Right ventricle myocardium inferior (tissue), 1 donor: ENCODE measurements at regions of chr4 and their contacts with region 1.

Region 1: DNA sequence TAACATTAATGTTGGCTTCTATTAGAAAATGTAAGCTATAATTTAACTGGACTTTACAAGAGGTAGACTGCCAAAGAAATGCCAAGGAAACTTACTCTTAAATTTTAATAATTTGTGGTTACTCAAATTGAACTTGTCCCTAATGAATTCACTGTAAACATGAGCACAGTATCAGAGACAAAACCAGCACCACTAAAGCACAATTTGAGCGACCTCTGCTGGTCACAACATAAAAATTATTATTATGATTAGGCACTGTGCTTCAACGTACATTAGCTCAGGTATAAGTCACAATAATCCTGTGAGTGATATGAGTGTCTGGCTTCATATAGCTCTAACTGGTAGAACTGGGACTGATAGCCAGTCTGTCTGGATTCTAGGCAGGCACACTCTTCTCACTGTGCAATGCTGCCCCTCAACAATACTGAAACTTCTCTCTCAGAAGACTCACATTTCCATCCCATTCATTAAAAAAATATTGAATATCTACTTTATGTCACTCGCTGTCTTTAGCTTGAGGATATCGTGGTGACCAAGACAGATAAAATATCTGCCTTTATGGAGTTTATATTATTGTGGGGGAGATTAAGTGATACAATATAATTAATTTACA is 8.0 kb downstream of the NUDT6 start:
- DNase-seq: no peak
- ATAC-seq: peak; percentile 60

Region 2: DNA sequence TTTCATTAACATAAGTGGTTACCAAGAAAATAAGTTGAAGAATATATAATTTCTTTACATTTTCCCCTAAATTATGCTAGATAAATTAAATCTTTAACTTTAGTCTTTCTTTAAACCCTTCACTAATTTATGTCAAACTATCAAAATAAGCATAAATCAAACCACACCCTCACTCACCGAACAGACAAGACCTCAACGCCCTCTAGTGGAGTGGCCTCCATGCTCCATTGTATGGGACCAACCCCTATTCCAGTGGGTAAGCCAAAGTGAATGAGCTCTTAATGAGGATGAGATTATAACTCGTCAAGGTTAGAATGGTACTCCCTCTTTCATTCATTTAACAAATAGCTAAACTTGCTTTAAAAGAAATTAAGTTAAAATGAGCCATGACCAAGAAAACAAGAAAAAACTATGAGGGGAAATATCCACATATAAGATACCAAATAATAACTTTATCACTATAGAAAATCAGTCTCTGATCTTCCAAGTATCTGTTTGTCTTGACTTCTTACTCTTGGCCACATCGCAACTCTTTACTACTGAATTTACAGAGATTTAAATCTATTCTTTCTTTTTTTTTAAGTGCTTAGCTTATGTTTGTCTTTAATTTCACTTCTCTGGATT is 197.5 kb before region 1 on chr4:
- intact Hi-C with region 1: no loop called
- DNase-seq: peak; percentile 68
- ATAC-seq: no peak

Region 3: DNA sequence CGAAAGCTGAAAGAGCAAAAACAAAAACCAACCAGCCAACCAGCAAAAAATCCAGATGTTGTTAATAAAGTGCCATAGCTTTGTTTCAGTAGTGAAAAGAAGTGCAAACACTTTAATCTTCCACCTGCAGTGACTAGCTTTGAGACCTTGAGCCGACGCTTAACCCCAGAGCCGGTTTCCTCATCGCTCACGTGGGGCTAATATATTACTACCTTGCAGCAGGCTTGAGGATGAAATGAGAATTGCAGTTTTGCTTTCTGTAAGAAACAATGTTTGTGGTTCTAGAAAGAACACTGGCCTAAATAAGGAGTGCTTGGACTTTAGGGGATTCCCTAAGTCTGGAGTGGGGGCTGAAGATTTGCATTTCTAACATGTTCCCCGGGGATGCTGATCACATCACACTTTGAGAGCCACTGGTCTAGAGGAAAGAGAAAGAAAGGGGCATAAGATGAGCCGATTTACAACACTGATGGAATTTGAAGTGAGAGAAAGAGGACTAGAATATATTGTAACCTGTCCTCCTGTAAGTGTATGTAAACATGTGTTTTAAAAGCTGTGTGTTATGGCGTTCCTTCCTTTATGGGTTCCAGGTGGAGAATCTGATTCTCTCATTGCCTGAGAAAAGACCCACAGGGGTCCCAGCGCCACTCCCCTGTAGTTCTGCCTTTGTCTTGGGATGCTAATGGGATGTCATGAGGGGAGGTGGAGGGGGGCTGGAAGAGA is 86.4 kb before region 1 on chr4:
- intact Hi-C with region 1: loop called (anchors 5 kb)
- DNase-seq: no peak
- ATAC-seq: no peak

Region 4: DNA sequence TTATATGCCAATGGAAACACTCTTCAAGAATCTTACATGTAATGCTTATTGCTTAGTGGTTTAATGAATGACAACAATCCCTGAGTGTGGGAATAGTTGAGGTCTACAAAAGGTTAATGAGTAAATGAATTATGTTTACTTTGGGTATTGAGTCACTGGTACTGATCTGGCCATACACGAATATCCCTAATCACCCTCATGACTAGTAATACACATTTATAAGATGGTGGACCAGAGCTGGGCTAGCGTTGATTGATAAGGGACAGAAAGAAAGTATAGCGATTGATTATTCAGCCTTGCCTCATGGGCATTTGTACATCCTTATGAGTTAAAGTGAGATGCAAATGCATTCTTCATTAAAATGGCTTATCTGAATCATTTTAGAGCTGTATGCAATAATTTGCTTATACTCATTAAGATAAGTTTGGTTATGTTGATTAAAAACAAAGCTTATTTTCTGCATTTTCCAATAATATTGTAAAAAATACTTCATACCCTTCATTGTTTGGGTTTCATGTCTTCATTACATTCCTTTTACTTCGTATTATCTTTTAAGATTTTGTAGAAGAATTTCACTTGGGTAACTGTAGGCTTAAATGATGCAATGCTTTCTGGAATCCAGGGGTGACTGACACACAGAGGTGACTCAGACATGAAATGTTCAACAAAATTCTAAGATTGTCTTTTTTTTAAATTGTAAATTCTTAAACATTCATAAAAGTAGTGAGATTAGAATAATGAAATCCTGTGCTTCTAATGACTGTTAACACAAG is 40.4 kb before region 1 on chr4:
- intact Hi-C with region 1: no loop called
- DNase-seq: no peak
- ATAC-seq: no peak